Dorsolateral prefrontal cortex (tissue), 120 donors: ENCODE measurements at regions of chr22 and their contacts with region 1.

Region 1: DNA sequence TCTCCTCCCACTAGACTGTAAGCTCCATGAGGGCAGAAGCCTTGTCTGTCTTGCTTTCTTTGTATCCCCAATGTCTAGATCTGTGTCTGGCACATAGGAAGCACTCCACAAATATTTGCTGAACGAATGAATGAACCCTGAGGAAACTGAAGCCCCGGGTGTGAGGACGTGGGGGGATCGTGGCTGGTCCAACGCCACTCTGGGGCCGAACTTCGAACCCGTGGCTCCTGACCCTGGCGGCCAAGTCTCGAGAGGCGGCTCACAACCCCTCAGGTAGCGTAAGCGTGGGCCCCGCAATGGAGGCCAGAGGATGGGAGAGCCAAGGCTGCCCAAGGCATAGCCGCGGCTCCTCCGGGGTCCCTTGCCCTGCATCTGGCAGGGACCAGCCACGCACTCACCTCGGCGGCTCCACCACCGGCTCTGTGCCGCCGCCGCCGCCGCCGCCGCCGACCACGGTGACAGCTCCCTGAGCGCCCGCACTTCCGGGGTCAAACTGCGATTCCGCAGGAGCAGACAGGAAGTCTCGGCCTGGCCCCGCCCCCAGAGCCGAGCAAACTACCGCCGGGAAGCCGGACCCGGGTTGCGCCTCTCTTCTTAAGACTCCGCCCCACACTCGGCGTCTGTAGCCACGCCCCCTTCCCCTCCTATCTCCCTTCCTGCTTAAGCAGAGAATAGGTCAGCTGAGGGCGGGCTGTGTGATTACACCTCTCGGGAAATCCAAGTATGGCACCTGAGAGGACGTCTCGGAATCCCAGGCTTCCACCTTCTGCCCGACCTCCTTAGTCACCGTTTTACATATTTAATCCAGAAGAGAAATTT is at the start of gene ASCC2:
- DNase-seq: peak; percentile 94 to 99 (median 97)
- H3K4me3 ChIP-seq: peak within 1 kb of the TSS; percentile 65 to 100 (median 94)
- H3K27ac ChIP-seq: peak within 1 kb of the TSS in 55 of 59 donors; percentile 2 to 90 (median 74)
- H3K27me3 ChIP-seq: no peaks in the 10 kb centered on the region
- CTCF ChIP-seq: peak in 36 of 56 donors; percentile 5 to 56 (median 29)
- total RNA-seq, gene ASCC2: 22.5 to 65.4 (median 35.4) TPM

Region 2: GRCh38 chr22:30079952-30080533 is 242.1 kb after region 1 on chr22 and contains the start of gene HORMAD2:
- intact Hi-C with region 1: loop called in 1 of 2 experiments (anchors 10 kb)
- DNase-seq: peak in 5 of 10 donors; percentile 19 to 64 (median 44)
- H3K4me3 ChIP-seq: peak within 1 kb of the TSS in 57 of 59 donors; percentile 6 to 66 (median 46)
- H3K27ac ChIP-seq: peak within 1 kb of the TSS in 1 of 59 donors; percentile 18
- H3K27me3 ChIP-seq: peaks cover 0 to 18% (median 4%) of the 10 kb centered on the region in 45 donors
- CTCF ChIP-seq: no peak
- total RNA-seq, gene HORMAD2: 0.20 to 2.0 (median 0.59) TPM in 46 of 120 experiments, not detected in the others